ENCODE measurements at regions of chr22 and their contacts with region 1.

Region 1: GRCh38 chr22:19629720-19630419 is 84.4 kb upstream of the SEPTIN5 start:
- DNase-seq: peak; percentile 90
- ATAC-seq: peak; percentile 93
- H3K4me3 Mint-ChIP-seq: no peak overlapping the region
- H3K27ac Mint-ChIP-seq: no peak overlapping the region
- H3K4me1 Mint-ChIP-seq: no peaks in the 10 kb centered on the region
- H3K27me3 Mint-ChIP-seq: peaks cover 1% of the 10 kb centered on the region

Region 2: GRCh38 chr22:19178656-19179496 is 451.0 kb before region 1 on chr22 and contains the start of gene SLC25A1:
- CTCF ChIA-PET with region 1: interaction called, 12 read pairs
- POLR2A ChIA-PET with region 1: no interaction called
- DNase-seq: peak; percentile 88
- ATAC-seq: peak; percentile 86
- H3K4me3 Mint-ChIP-seq: peak within 1 kb of the TSS; percentile 78
- H3K27ac Mint-ChIP-seq: peak within 1 kb of the TSS; percentile 60
- H3K4me1 Mint-ChIP-seq: peaks cover 40% of the 10 kb centered on the region
- H3K27me3 Mint-ChIP-seq: no peaks in the 10 kb centered on the region
- total RNA-seq, gene SLC25A1: 69.1 to 73.0 TPM

Region 3: DNA sequence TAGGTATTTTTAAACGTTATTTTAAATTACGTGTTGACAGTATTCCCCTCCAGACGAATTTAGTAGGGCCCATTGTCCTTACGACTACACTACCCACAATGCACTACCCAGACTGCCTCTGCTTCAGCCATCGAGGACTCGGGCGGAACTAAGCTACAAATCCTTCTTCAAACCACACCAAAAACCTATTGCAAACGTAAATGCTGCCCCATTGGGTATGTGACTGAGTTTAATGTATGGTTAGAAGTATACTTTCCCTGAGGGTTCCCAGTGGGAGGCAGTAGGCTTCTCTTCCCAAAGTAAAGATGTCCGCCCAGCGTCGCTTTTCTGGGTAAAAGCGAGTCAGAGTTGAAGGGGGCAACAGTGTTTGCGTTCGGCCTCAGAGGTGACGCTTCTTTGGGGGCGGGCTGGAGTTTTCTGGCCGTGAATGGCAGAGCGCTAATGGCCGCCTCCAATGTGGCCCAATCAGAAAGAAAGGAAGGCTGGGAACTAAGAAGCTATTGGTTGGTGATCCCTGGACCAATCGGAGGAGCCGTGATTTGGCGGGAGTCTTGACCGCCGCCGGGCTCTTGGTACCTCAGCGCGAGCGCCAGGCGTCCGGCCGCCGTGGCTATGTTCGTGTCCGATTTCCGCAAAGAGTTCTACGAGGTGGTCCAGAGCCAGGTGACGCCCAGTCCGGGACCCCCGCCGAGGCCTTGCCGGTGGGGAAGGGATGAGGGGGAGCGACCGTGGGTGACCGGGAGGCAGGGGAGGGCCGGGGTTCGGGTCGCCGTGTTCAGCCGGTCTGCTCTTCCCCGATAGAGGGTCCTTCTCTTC is 150.3 kb before region 1 on chr22 and contains the start of gene CDC45:
- CTCF ChIA-PET with region 1: interaction called, 29 read pairs
- POLR2A ChIA-PET with region 1: interaction called, 6 read pairs
- DNase-seq: peak; percentile 98
- ATAC-seq: peak; percentile 94
- H3K4me3 Mint-ChIP-seq: peak within 1 kb of the TSS; percentile 99
- H3K27ac Mint-ChIP-seq: peak within 1 kb of the TSS; percentile 98
- H3K4me1 Mint-ChIP-seq: peaks cover 30% of the 10 kb centered on the region
- H3K27me3 Mint-ChIP-seq: no peaks in the 10 kb centered on the region
- total RNA-seq, gene CDC45: 90.2 to 94.3 TPM

Region 4: GRCh38 chr22:19504900-19505734 is 124.8 kb before region 1 on chr22:
- CTCF ChIA-PET with region 1: interaction called, 11 read pairs
- POLR2A ChIA-PET with region 1: interaction called, 3 read pairs
- DNase-seq: peak; percentile 56
- ATAC-seq: peak; percentile 55
- H3K4me3 Mint-ChIP-seq: peak overlapping the region; percentile 28
- H3K27ac Mint-ChIP-seq: peak overlapping the region; percentile 83
- H3K4me1 Mint-ChIP-seq: peaks cover 31% of the 10 kb centered on the region
- H3K27me3 Mint-ChIP-seq: no peaks in the 10 kb centered on the region

Region 5: GRCh38 chr22:19530751-19531150 is 99.1 kb before region 1 on chr22:
- CTCF ChIA-PET with region 1: interaction called, 12 read pairs
- POLR2A ChIA-PET with region 1: no interaction called
- DNase-seq: no peak
- ATAC-seq: no peak
- H3K4me3 Mint-ChIP-seq: no peak overlapping the region
- H3K27ac Mint-ChIP-seq: no peak overlapping the region
- H3K4me1 Mint-ChIP-seq: peaks cover 3% of the 10 kb centered on the region
- H3K27me3 Mint-ChIP-seq: peaks cover 19% of the 10 kb centered on the region

Region 6: GRCh38 chr22:19766511-19767426 is 136.9 kb after region 1 on chr22:
- CTCF ChIA-PET with region 1: no interaction called
- POLR2A ChIA-PET with region 1: no interaction called
- DNase-seq: peak; percentile 83
- ATAC-seq: peak; percentile 82
- H3K4me3 Mint-ChIP-seq: peak overlapping the region; percentile 63
- H3K27ac Mint-ChIP-seq: no peak overlapping the region
- H3K4me1 Mint-ChIP-seq: peaks cover 20% of the 10 kb centered on the region
- H3K27me3 Mint-ChIP-seq: peaks cover 60% of the 10 kb centered on the region

Region 7: DNA sequence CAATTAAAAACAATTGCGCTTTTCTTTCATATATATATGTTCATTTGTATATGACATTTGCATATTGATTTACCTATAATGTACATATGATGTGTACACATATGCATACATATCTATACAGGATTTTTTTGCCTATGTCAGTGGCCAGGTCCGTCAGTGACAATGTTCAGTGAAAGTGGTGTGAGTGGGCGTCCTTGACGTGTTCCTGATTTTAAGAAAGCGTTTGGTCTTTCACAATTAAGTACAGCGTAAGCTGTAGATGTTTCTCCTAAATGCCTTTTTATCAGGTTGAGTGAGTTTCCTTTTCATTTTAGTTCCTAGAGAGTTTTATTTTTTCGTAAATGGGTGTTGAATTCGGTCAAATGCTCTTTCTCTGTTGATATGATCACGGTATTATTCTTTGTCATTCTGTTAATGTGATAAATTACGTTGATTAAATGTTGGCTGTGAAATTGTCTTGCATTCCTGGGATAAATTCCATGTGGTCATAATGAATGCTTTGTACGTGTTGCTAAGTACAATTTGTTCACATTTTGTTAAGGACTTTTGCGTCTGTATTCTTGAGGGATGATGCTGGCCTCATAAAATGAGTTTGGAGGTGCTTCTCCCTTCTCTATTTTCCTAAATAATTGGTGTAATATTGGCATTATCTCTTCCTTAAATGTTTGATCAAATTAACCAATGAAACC is 235.4 kb after region 1 on chr22:
- CTCF ChIA-PET with region 1: no interaction called
- POLR2A ChIA-PET with region 1: no interaction called
- DNase-seq: no peak
- ATAC-seq: no peak
- H3K4me3 Mint-ChIP-seq: no peak overlapping the region
- H3K27ac Mint-ChIP-seq: no peak overlapping the region
- H3K4me1 Mint-ChIP-seq: no peaks in the 10 kb centered on the region
- H3K27me3 Mint-ChIP-seq: no peaks in the 10 kb centered on the region

Measured in activated CD8-positive, alpha-beta T cell treated with anti-CD3 and anti-CD28 coated beads, Interleukin-2, amount 10 ng/mL, durations not matched to agents 7 days and 5 days (primary cell).